PC-9 (cell line): ENCODE measurements at regions of chr6 and their contacts with region 1.

Region 1: DNA sequence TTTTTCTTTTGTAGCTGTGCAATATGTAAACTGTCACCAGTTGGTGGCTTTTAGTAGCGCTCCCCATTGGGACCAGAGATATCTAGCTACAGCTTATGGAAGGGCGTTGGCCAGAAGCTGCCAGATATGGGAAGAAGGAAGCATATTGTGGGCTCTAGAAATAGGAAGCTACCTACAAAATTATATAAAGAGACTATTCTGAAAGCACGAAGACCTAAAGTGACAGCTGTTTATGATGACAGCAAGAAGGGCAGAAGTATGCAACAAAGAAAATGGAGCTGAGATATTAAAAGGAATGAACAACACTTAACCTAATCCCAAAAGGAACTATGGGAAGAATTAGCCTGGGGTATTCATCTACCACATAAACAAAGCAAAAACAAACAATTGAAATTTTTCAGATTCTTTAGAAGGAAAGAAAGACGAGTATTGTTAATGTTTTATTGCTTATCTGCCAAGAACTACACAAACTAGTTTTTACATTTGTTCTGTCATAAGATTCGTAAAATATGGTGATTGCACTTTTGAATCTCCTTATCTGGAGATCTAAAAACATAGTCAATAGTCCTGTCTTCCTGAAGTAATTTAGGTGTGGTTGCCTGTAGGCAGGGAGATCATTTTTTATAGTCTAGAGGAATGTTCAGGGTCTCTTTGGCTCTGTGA is 81.6 kb downstream of the NCOA7 start:
- DNase-seq: peak in 1 of 2 experiments; percentile 98
- H3K4me3 ChIP-seq: peak overlapping the region; percentile 7; the same call in 1 of the 2 replicates
- H3K27ac ChIP-seq: peak overlapping the region; percentile 75
- H3K4me1 ChIP-seq: peaks cover 58% of the 10 kb centered on the region
- H3K27me3 ChIP-seq: no peaks in the 10 kb centered on the region
- CTCF ChIP-seq: no peak

Region 2: DNA sequence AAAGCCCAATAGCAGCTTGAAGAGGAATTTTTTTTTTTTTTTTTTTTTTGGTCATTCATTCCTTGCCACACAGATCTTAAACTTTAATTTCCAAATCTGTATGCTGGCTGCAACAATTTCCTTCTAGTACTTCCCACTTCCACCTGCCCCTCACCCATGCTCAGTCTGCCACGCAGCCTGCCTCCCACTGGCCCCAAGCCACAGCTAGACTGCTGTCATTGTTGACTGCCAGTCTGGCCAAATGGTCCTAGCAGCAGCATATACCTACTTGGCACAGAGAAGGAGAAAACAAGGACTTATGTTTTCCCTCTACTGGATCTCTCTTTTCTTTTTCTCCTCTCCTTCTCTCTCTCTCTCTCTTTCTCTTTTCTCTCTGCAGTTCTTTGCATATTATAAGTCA is 241.2 kb before region 1 on chr6:
- CTCF ChIA-PET with region 1: no interaction called
- POLR2A ChIA-PET with region 1: no interaction called
- intact Hi-C with region 1: no loop called
- DNase-seq: no peak
- H3K4me3 ChIP-seq: no peak overlapping the region
- H3K27ac ChIP-seq: no peak overlapping the region
- H3K4me1 ChIP-seq: 0 out of 2 replicates have a peak, but pooled peaks cover 2% of the 10 kb centered on the region
- H3K27me3 ChIP-seq: peaks cover 16% of the 10 kb centered on the region
- CTCF ChIP-seq: no peak

Region 3: GRCh38 chr6:125790358-125791150 is 81.8 kb before region 1 on chr6 and contains the start of gene NCOA7:
- CTCF ChIA-PET with region 1: no interaction called
- POLR2A ChIA-PET with region 1: interaction called, 5 read pairs
- intact Hi-C with region 1: loop called (anchors 2 kb)
- DNase-seq: peak; percentile 50 to 78
- H3K4me3 ChIP-seq: peak within 1 kb of the TSS; percentile 75
- H3K27ac ChIP-seq: peak within 1 kb of the TSS; percentile 48
- H3K4me1 ChIP-seq: peaks cover 53% of the 10 kb centered on the region
- H3K27me3 ChIP-seq: no peaks in the 10 kb centered on the region
- CTCF ChIP-seq: no peak
- total RNA-seq, gene NCOA7: 47.6 and 51.0 TPM in 2 replicates

Region 4: GRCh38 chr6:125812394-125813292 is 59.7 kb before region 1 on chr6:
- CTCF ChIA-PET with region 1: no interaction called
- POLR2A ChIA-PET with region 1: no interaction called
- intact Hi-C with region 1: loop called (anchors 1 kb)
- DNase-seq: peak; percentile 37 to 56
- H3K4me3 ChIP-seq: no peak overlapping the region
- H3K27ac ChIP-seq: peak overlapping the region; percentile 20
- H3K4me1 ChIP-seq: peaks cover 42% of the 10 kb centered on the region
- H3K27me3 ChIP-seq: no peaks in the 10 kb centered on the region
- CTCF ChIP-seq: no peak

Region 5: DNA sequence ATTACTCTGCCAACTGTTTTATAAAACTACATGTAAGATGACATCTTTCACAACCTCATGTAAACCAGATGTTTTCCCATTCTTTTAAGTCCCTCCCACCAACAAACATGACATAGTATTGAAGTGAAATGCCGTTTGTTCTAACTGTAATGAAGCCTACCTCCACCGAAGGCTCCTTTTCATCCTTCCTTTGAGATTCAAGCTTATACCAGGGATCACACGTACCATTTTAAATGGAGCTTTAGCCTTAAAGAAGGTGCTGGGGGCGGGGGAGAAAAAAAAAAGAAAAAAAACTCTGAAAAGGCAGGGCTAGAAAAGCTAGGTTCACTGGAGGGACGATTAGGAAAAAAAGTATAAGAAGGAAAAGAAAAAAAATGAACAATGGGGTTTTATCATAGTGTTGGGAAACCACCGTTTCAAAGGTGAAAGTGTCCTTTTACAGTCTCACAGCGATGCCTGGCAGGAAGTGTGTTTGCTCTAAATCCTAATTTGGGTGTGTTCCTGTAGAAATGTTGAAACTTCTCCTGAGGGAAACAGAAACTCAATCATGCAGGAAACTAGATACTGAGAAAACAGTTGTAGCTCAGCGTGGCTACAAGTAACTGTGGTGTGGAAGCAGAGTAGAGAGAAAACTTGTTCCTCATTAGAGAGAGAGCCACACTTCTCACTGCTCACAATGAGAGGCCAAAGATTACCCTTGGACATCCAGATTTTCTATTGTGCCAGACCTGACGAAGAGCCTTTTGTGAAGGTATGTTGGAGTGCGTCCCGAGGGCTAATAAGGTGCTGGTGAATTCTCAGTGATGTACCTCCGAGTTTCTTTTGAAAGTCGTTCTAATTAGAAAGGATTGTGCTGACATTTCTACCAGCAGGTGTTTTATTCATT is 46.5 kb after region 1 on chr6:
- CTCF ChIA-PET with region 1: no interaction called
- POLR2A ChIA-PET with region 1: no interaction called
- intact Hi-C with region 1: loop called (anchors 1 kb)
- DNase-seq: peak; percentile 59 to 99
- H3K4me3 ChIP-seq: peak overlapping the region; percentile 71
- H3K27ac ChIP-seq: peak overlapping the region; percentile 98
- H3K4me1 ChIP-seq: peaks cover 75% of the 10 kb centered on the region
- H3K27me3 ChIP-seq: no peaks in the 10 kb centered on the region
- CTCF ChIP-seq: no peak

Region 6: DNA sequence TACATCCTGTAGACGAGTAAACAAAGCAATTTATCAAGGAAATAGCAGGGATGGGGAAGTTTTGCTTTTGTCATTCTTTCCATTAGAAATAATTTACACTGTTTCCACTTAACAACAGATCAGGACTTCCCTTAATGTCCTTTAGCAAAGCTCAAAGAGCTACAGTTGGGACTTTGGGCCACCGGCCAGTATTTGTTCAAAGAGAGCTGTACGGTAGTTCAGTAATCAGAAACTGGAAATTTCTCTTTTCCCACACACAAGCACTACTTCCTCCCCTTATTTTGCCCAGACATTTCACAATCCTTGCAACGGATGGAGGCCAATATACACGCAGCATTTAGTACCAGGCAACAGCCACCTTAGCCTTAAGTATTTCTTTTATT is 72.0 kb after region 1 on chr6:
- CTCF ChIA-PET with region 1: no interaction called
- POLR2A ChIA-PET with region 1: interaction called, 6 read pairs
- intact Hi-C with region 1: loop called (anchors 2 kb)
- DNase-seq: peak; percentile 19 to 36
- H3K4me3 ChIP-seq: no peak overlapping the region
- H3K27ac ChIP-seq: peak overlapping the region; percentile 98
- H3K4me1 ChIP-seq: peaks cover 97% of the 10 kb centered on the region
- H3K27me3 ChIP-seq: no peaks in the 10 kb centered on the region
- CTCF ChIP-seq: no peak

Region 7: GRCh38 chr6:125956506-125957390 is 84.4 kb after region 1 on chr6 and contains the start of gene HINT3:
- CTCF ChIA-PET with region 1: interaction called, 5 read pairs
- POLR2A ChIA-PET with region 1: interaction called, 4 read pairs
- intact Hi-C with region 1: loop called (anchors 2 kb)
- DNase-seq: peak; percentile 95 to 97
- H3K4me3 ChIP-seq: peak within 1 kb of the TSS; percentile 92
- H3K27ac ChIP-seq: peak within 1 kb of the TSS; percentile 80
- H3K4me1 ChIP-seq: peaks cover 21% of the 10 kb centered on the region
- H3K27me3 ChIP-seq: no peaks in the 10 kb centered on the region
- CTCF ChIP-seq: peak; percentile 99
- total RNA-seq, gene HINT3: 13.6 and 14.4 TPM in 2 replicates